ENCODE measurements at regions of chr3 and their contacts with region 1.

Region 1: GRCh38 chr3:125594581-125595011 is 701 bp downstream of the OSBPL11 start:
- DNase-seq: peak in 1 of 5 donors; percentile 2
- H3K4me3 ChIP-seq: peak overlapping the region; percentile 43 to 80
- H3K4me3 Mint-ChIP-seq: peak overlapping the region; percentile 88 to 100 (median 98)
- H3K27ac ChIP-seq: peak overlapping the region; percentile 75
- H3K27ac Mint-ChIP-seq: peak overlapping the region; percentile 88 to 99 (median 93)
- H3K4me1 ChIP-seq: peaks cover 52% of the 10 kb centered on the region
- H3K4me1 Mint-ChIP-seq: peaks cover 25 to 55% (median 40%) of the 10 kb centered on the region in 4 donors
- H3K27me3 ChIP-seq: no peaks in the 10 kb centered on the region
- H3K27me3 Mint-ChIP-seq: no peaks in the 10 kb centered on the region

Region 2: DNA sequence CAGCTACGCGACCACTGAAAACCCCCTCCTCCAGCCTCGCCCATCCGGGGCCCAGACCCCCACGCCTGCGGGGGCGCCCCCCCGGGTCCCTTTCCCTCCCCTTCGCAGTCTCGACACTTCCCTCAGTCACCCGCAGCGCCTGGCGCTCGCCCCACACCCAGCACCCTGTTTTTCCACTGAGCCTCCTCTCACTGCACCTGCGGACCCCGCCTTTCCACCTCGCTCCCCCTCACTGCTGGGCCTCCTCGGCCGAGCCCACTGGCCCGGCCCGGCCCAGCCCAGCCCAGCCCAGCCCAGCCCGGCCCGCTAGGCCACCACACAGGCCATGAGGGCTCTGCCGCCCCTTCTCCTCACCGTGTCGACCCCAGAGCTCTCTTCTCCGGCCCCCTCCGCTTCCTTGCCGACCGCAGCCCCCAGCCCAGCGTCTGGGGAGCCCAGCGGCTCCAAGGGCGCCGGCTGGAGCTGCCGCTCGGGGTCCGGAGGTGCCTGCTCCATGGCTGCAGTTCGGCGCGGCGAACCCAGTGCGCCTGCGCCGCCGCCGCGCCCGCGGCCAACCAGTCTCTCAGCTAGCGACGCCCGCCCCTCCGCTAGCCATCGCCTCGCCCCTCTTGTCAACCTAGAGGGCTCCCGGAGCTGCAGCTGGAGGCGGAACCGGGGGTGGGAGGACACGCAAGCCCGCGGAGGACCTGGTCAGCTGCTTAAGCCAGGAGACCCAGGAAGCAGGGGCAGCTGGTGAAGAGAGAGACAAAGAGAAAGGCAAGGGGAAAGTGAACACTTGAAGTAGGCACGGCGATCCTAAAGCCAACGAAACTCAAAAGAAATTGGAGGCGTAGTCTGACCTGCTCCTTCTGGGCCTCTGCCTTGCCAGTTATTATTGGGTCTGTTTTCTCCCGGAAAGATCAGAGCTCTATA is 74.7 kb before region 1 on chr3 and contains the start of gene SNX4:
- CTCF ChIA-PET with region 1: no interaction called
- POLR2A ChIA-PET with region 1: interaction called, 13 read pairs
- intact Hi-C with region 1: loop called (anchors 2 kb)
- DNase-seq: peak; percentile 81 to 90 (median 83)
- H3K4me3 ChIP-seq: peak within 1 kb of the TSS; percentile 75 to 84
- H3K4me3 Mint-ChIP-seq: peak within 1 kb of the TSS; percentile 90 to 99 (median 96)
- H3K27ac ChIP-seq: peak within 1 kb of the TSS; percentile 66
- H3K27ac Mint-ChIP-seq: peak within 1 kb of the TSS; percentile 82 to 96 (median 95)
- H3K4me1 ChIP-seq: peaks cover 28% of the 10 kb centered on the region
- H3K4me1 Mint-ChIP-seq: peaks cover 21 to 42% (median 35%) of the 10 kb centered on the region in 4 donors
- H3K27me3 ChIP-seq: no peaks in the 10 kb centered on the region
- H3K27me3 Mint-ChIP-seq: no peaks in the 10 kb centered on the region
- total RNA-seq, gene SNX4: 23.0 to 23.6 TPM